Activated CD4-positive, alpha-beta T cell treated with anti-CD3 and anti-CD28 coated beads, Interleukin-2, amount 10 ng/mL, durations not matched to agents 24 days and 14 days (primary cell): ENCODE measurements at regions of chr6 and their contacts with region 1.

Region 1: DNA sequence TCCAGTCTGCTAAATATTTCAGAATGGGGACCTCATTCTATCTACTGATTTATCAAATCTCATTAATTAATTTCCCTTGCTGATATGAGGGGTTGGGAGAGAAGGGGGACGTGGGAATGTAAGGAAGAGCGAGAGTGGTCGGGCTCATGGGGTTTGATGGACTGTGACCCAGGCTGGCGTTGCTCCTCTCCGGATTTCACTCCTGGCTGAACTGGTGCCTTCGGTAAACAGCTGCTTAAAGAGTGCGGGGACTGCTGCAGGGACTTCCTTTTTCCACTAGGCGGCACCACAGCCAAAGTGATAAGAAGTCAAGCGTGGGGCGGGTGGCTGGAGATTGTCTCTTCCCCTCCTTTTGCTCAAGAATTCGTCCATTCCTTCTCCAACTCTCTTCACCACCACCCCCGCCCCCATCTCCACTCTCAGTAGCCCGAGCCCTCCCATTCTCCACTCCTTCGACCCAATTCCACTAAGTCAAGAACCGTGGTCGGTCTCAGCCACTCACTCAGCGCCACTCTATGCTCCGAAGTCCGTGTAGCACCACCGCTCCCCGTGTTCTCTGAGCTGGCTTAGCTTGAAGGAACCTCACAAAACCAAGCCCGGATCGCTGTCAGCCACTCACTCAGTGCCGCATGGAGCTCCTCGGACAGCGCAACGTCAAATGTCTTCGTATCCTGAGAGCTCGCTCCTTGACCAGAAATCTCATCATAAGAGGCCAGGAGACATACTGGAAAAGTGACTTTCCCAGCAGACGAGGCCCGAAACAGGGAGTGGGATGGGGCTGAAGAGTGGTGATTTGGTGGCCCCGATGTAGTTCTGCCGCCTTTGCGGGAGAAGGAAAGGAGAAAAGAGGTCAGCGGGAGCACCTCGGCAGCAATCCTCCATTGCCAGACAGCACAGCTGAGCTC is 9.7 kb downstream of the TRIM31 start:
- DNase-seq: peak; percentile 95
- H3K4me3 Mint-ChIP-seq: peak overlapping the region; percentile 86
- H3K27ac Mint-ChIP-seq: peak overlapping the region; percentile 38
- H3K4me1 Mint-ChIP-seq: peaks cover 29% of the 10 kb centered on the region
- H3K27me3 Mint-ChIP-seq: peaks cover 57% of the 10 kb centered on the region

Region 2: GRCh38 chr6:30066577-30067459 is 36.4 kb before region 1 on chr6 and contains the start of gene PPP1R11:
- intact Hi-C with region 1: loop called (anchors 2 kb)
- DNase-seq: peak; percentile 99
- H3K4me3 Mint-ChIP-seq: peak within 1 kb of the TSS; percentile 93
- H3K27ac Mint-ChIP-seq: peak within 1 kb of the TSS; percentile 99
- H3K4me1 Mint-ChIP-seq: peaks cover 45% of the 10 kb centered on the region
- H3K27me3 Mint-ChIP-seq: peaks cover 16% of the 10 kb centered on the region
- total RNA-seq, gene PPP1R11: 60.9 and 61.1 TPM in 2 replicates

Region 3: DNA sequence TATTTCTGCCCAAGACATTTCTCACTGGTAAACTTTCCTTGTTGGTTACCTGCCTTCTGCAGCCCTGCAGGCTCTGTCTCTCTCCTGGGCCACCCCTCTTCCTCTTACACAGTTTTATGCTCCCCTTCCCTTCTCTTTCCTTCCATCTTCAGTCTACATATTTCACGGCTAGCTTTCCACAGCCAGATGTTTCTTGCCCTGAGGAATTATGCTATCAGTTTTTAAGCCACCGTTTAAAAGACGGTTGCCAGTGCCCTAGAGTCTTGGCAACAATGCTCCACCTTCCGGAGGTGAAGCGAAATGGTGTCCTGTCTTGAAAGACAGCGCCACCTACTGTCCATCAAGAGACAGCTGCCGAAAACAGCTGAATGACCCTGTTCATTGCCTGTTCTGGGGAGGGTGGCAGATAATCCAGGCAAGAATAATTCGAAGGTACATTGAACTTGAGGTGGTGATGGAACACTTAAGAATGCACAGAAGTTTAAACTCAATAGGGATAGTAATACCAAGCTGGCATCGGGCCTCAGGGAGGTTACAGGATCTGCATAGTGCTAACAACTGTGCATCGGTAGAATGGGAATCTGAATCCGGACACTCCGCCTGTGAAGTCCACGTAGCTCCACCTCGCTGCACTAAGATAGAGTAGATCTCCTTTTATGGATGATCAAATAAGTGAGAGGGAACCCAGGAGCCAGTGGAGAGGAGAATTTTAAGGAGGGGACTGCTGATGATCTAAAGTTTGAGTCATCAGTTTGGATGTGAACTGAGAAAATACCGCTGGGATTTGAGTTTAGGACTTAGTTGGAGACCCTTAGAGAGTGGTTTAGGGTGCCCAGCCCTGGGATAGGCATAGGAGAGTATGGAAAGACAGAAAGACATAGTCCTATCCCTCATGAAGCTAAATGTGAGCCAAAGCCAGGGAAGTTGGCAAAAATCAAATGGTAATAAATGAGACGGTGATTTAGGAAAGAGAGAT is 28.0 kb after region 1 on chr6:
- intact Hi-C with region 1: loop called (anchors 1 kb)
- DNase-seq: peak; percentile 91
- H3K4me3 Mint-ChIP-seq: peak overlapping the region; percentile 2
- H3K27ac Mint-ChIP-seq: no peak overlapping the region
- H3K4me1 Mint-ChIP-seq: peaks cover 19% of the 10 kb centered on the region
- H3K27me3 Mint-ChIP-seq: peaks cover 60% of the 10 kb centered on the region

Region 4: GRCh38 chr6:30212865-30213666 is 109.8 kb after region 1 on chr6 and contains the start of gene TRIM26:
- intact Hi-C with region 1: loop called (anchors 1 kb)
- DNase-seq: peak; percentile 100
- H3K4me3 Mint-ChIP-seq: peak within 1 kb of the TSS; percentile 96
- H3K27ac Mint-ChIP-seq: peak within 1 kb of the TSS; percentile 98
- H3K4me1 Mint-ChIP-seq: peaks cover 47% of the 10 kb centered on the region
- H3K27me3 Mint-ChIP-seq: peaks cover 2% of the 10 kb centered on the region
- total RNA-seq, gene TRIM26: 58.3 and 60.1 TPM in 2 replicates

Region 5: DNA sequence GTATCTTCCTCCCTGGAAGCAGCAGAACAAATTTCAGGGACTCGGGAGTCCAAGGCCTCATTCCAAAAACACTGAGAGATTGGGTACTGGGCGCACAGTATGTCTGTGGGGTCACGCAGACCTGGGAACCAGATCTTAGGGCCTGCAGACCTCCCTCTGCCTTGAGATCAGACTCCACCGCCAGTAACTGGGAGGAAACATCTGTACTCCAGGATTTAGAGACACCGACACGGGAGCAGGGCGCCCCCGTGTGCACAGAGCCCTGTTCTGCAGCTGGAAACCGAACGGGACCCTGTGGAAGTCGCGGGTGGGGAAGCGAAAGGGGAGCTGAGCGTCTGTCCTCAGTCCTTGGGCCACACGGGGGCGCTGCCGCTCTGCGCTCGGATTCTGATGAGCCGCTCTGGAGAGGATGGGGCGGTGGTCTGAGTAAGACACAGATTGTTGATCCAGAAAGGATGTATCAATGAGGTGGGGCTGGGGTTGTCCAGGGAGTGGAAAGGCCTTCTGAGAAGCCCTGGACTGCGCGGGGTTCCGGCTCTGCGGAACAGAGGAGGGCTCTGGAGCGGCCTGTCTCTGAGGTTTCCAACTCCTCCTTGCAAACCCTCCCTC is 350.4 kb after region 1 on chr6:
- intact Hi-C with region 1: loop called (anchors 5 kb)
- DNase-seq: peak; percentile 97
- H3K4me3 Mint-ChIP-seq: peak overlapping the region; percentile 45
- H3K27ac Mint-ChIP-seq: no peak overlapping the region
- H3K4me1 Mint-ChIP-seq: peaks cover 26% of the 10 kb centered on the region
- H3K27me3 Mint-ChIP-seq: peaks cover 82% of the 10 kb centered on the region